ENCODE measurements at regions of chr1 and their contacts with region 1.

Region 1: GRCh38 chr1:109483672-109484518 is at the start of gene ATXN7L2:
- DNase-seq: peak; percentile 94
- ATAC-seq: peak; percentile 75
- H3K4me3 Mint-ChIP-seq: peak within 1 kb of the TSS; percentile 91
- H3K27ac Mint-ChIP-seq: peak within 1 kb of the TSS; percentile 90
- H3K4me1 Mint-ChIP-seq: peaks cover 45% of the 10 kb centered on the region
- H3K27me3 Mint-ChIP-seq: peaks cover 10% of the 10 kb centered on the region
- total RNA-seq, gene ATXN7L2: 10.2 to 11.6 TPM

Region 2: DNA sequence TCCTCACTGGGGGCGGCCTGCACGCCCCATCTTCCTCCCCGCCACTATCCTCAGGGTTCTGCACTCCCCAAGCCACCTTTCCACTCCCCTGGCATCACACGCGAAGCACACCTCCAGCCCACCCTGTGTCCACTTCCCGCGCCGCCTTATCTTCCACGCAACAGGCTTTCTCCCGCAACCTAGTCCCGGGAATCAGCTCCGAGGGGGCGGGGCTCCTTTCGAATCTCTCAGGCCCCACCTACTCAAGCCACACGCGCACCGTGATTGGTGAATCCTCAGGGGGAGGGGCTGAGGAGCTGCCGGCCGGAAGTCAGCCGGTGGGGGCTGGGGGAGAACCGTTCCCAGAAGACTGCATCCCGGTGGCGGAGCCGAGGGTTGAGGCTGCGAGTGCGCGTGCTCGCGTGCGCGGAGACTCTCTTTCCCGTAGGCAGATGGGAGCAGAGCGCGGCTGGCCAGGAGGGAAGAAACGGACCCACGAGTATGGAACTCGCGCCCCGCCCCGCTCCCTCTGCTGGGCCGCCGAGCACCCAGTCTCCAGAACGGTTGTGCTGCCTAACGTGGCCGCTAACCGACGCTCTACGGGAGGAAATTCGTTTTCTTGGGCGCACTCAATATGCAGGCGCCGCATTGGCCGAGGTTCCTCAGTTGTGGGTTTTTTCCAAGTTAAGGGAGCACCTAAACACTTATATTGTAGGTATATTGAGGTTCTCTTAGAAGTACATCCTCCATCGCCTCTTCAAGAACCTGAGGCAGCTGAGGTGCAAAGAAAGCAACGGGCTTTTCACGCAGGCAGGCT is 200.7 kb before region 1 on chr1 and contains the start of gene PSRC1:
- CTCF ChIA-PET with region 1: interaction called, 3 read pairs
- POLR2A ChIA-PET with region 1: interaction called, 10 read pairs
- DNase-seq: peak; percentile 93
- ATAC-seq: peak; percentile 97
- H3K4me3 Mint-ChIP-seq: peak within 1 kb of the TSS; percentile 99
- H3K27ac Mint-ChIP-seq: peak within 1 kb of the TSS; percentile 91
- H3K4me1 Mint-ChIP-seq: peaks cover 31% of the 10 kb centered on the region
- H3K27me3 Mint-ChIP-seq: peaks cover 7% of the 10 kb centered on the region
- total RNA-seq, gene PSRC1: 38.2 to 40.7 TPM

Region 3: DNA sequence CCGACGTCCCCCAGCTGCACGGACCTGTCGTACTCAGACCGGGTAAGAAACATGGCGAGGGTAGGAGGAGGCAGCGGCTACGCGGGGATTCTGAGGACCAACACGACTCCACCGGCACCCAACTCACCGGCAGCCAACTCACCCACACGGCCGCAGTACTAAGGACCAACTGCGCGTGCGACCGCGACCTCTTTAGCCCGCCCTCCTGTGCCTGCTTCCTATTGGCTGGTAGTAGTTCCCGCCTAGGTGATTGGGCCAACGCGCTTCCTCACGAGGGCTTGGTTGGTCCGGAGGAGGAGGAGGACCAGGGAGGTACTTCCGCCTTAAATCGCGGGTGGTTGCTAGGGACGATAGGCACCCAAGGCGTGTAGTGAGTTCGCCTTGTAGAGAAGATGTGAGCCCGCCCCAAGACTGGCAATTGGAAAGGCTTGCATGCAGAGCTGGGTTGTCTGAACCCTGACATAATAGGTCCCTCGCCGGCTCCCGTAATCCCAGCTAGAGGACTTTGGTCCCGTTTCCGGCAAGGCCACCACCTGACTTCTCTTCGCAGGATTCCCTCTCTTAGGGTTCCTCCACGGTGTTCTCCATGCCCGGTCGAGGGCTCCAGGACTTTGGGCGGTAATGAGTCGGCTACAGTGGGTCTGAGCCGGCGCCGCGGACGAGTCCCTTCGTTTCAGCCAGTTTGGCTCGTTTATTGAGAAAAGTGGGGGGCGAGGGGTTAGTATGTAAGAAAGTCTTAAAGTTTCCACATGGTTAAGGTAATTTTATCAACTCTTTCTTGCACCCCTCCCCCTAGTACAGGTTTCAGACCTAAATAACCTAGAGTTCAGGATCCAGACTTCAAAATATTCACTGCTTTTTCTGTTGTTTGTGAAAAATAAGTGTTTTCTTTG is 57.4 kb before region 1 on chr1 and contains the start of gene PSMA5:
- CTCF ChIA-PET with region 1: interaction called, 12 read pairs
- POLR2A ChIA-PET with region 1: interaction called, 27 read pairs
- DNase-seq: peak; percentile 98
- ATAC-seq: peak; percentile 94
- H3K4me3 Mint-ChIP-seq: peak within 1 kb of the TSS; percentile 95
- H3K27ac Mint-ChIP-seq: peak within 1 kb of the TSS; percentile 97
- H3K4me1 Mint-ChIP-seq: peaks cover 37% of the 10 kb centered on the region
- H3K27me3 Mint-ChIP-seq: no peaks in the 10 kb centered on the region
- total RNA-seq, gene PSMA5: 174 to 189 TPM

Region 4: DNA sequence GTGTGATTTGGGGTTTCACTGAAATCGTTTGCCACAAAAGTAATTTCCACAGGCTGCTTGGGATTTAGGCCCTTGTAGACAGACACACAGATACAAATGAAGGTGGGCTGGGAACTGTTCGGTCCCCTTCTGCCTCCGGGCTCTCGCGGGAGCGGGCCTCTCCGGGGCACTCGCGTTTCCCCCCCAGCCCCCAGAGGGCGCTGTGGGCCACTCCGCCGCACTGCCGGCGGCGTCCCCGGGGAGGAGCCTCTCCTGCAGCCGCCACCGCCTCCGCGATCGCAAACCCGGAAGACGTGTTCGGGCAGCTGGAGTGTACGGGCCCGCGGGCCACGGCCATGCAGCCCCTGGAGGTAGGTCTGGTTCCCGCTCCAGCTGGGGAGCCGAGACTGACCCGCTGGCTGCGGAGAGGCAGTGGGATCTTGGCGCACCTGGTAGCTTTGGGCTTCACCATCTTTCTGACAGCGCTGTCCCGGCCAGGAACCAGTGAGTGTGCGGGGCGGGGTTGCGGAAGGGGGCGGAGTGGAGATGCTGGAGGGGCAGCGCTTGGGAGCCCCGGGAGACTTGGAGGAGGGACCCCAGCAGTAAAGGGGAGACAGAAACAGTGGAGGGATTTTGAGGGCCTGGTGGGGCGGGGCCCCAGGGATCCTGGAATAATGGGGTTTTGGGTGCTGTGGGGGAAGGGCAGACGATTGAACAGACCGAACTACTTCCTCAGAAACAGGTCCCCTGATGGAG is 10.1 kb after region 1 on chr1 and contains the start of gene CYB561D1:
- CTCF ChIA-PET with region 1: interaction called, 480 read pairs
- POLR2A ChIA-PET with region 1: interaction called, 9 read pairs
- DNase-seq: peak; percentile 91
- ATAC-seq: peak; percentile 91
- H3K4me3 Mint-ChIP-seq: peak within 1 kb of the TSS; percentile 97
- H3K27ac Mint-ChIP-seq: peak within 1 kb of the TSS; percentile 87
- H3K4me1 Mint-ChIP-seq: peaks cover 56% of the 10 kb centered on the region
- H3K27me3 Mint-ChIP-seq: no peaks in the 10 kb centered on the region
- total RNA-seq, gene CYB561D1: 19.0 to 19.8 TPM